ENCODE measurements at regions of chr7 and their contacts with region 1.

Region 1: GRCh38 chr7:107743567-107744344 is at the start of gene CBLL1:
- DNase-seq: peak; percentile 95
- ATAC-seq: peak; percentile 92
- H3K4me3 Mint-ChIP-seq: peak within 1 kb of the TSS; percentile 100
- H3K27ac Mint-ChIP-seq: peak within 1 kb of the TSS; percentile 100
- H3K4me1 Mint-ChIP-seq: peaks cover 24% of the 10 kb centered on the region
- H3K27me3 Mint-ChIP-seq: no peaks in the 10 kb centered on the region
- CTCF ChIP-seq: no peak
- total RNA-seq, gene CBLL1: 26.1 to 29.8 TPM (median 26.3 TPM) in 3 replicates

Region 2: GRCh38 chr7:107661081-107661864 is 82.5 kb before region 1 on chr7:
- CTCF ChIA-PET with region 1: interaction called, 12 read pairs
- POLR2A ChIA-PET with region 1: interaction called, 9 read pairs
- DNase-seq: peak; percentile 72
- ATAC-seq: peak; percentile 82
- H3K4me3 Mint-ChIP-seq: peak overlapping the region; percentile 85
- H3K27ac Mint-ChIP-seq: no peak overlapping the region
- H3K4me1 Mint-ChIP-seq: peaks cover 19% of the 10 kb centered on the region
- H3K27me3 Mint-ChIP-seq: peaks cover 80% of the 10 kb centered on the region
- CTCF ChIP-seq: no peak

Region 3: GRCh38 chr7:107810626-107811025 is 66.9 kb after region 1 on chr7:
- CTCF ChIA-PET with region 1: no interaction called
- POLR2A ChIA-PET with region 1: no interaction called
- DNase-seq: no peak
- ATAC-seq: peak; percentile 67
- H3K4me3 Mint-ChIP-seq: no peak overlapping the region
- H3K27ac Mint-ChIP-seq: no peak overlapping the region
- H3K4me1 Mint-ChIP-seq: no peaks in the 10 kb centered on the region
- H3K27me3 Mint-ChIP-seq: peaks cover 4% of the 10 kb centered on the region; the same call in 1 of the 2 replicates
- CTCF ChIP-seq: no peak